Natural killer cell (primary cell): ENCODE measurements at regions of chr3 and their contacts with region 1.

Region 1: DNA sequence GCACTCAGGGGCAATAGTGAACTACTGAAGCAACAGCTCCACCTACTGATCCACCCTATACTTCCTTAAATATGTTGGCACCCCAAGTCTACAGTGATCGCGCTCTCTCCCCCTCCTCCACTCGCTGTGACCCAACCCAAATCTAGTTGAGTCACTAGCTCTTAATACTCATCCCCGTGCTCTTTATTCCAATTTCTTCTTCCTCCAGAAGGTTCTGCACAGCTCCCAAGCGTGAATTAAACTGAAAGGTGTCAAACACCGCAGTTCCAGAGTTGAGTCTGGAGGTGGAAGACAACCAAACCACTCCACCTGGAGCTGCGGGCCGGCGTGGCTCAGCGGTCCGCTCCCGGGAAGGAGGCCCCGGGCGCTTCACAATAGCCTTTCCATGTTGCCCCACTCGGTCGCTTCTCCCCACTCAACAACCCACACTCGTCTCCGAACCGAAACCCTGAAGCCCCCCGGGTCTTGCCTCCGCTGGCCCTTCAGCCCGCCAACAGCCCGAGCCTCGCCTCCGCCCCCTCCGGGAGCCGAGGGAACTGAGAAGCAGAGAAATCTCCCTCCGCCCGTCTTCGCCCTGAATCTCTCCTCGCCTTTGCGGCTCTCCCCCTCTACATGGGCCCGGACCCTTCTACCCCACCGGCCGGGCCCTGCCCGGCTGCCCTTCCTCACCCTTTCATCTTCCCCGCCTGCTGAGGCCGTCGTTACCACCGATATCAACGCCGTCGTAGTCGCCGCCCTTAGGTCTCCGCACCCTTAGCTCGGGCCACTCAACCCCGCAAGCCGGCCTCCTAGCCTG is 578 bp downstream of the NAA50 start:
- DNase-seq: peak; percentile 63 to 94
- ATAC-seq: peak; percentile 65 to 85 (median 66)
- H3K4me3 ChIP-seq: peak overlapping the region; percentile 89
- H3K4me3 Mint-ChIP-seq: peak overlapping the region; percentile 100
- H3K27ac ChIP-seq: peak overlapping the region; percentile 96
- H3K27ac Mint-ChIP-seq: peak overlapping the region; percentile 93 to 100
- H3K4me1 ChIP-seq: peaks cover 25% of the 10 kb centered on the region
- H3K4me1 Mint-ChIP-seq: peaks cover 83% of the 10 kb centered on the region in 2 donors
- H3K27me3 ChIP-seq: no peaks in the 10 kb centered on the region
- H3K27me3 Mint-ChIP-seq: no peaks in the 10 kb centered on the region
- CTCF ChIP-seq: peak; percentile 68

Region 2: GRCh38 chr3:112561731-112562688 is 1183.5 kb before region 1 on chr3 and contains the starts of genes ATG3 and SLC35A5:
- intact Hi-C with region 1: loop called (anchors 5 kb)
- DNase-seq: peak; percentile 98 to 99
- ATAC-seq: peak; percentile 80 to 94 (median 86)
- H3K4me3 ChIP-seq: peak within 1 kb of the TSS; percentile 92
- H3K4me3 Mint-ChIP-seq: peak within 1 kb of the TSS; percentile 95
- H3K27ac ChIP-seq: peak within 1 kb of the TSS; percentile 96
- H3K27ac Mint-ChIP-seq: peak within 1 kb of the TSS; percentile 96 to 97
- H3K4me1 ChIP-seq: peaks cover 15% of the 10 kb centered on the region
- H3K4me1 Mint-ChIP-seq: peaks cover 46 to 47% of the 10 kb centered on the region in 2 donors
- H3K27me3 ChIP-seq: no peaks in the 10 kb centered on the region
- H3K27me3 Mint-ChIP-seq: no peaks in the 10 kb centered on the region
- CTCF ChIP-seq: no peak
- total RNA-seq, gene ATG3: 49.4 to 53.6 (median 52.0) TPM
- total RNA-seq, gene SLC35A5: 10.5 to 17.4 (median 11.2) TPM

Region 3: DNA sequence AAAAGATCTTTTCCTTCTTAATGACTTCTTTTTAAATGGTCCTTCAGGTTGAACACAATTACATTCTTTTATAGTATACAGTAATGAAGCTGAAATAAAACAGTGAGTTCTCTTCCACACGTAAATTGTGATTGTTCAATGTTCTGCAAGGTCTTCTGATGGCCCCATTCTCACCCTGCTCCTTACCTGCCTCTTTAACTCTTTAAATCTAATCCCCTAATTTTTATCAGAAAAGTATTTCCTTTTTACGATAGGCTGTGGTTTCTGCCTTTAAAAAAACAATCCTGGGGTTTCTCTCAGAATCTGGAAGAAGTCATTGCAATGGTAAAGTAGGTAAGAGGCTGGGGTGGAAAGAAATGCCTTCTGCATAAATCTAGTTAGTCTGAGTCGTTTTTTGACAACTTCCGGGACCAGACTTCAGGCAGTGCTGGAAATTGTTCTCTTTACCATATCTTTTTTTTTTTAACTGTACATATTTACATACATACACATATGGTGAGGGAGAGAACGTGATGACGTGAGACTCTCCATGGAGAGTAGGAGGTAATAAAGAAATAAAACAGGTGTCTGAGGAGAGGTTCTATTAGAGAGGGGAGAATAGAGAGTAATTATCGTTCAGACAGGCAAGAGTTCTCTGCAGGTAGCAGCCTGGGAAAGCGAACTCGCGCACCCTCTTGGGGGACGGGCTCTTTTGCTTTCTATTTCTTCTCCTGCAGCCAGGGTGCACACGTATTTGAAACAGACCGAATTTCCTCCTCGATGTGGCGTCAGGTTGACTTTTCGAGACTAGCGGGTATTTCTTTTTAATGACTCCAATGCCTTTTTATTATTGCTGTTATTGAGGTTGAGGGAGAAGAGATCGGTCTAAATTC is 213.4 kb before region 1 on chr3 and contains the start of gene SIDT1:
- intact Hi-C with region 1: loop called (anchors 5 kb)
- DNase-seq: peak; percentile 58 to 89
- ATAC-seq: peak; percentile 72 to 84 (median 77)
- H3K4me3 ChIP-seq: peak within 1 kb of the TSS; percentile 87
- H3K4me3 Mint-ChIP-seq: peak within 1 kb of the TSS; percentile 97
- H3K27ac ChIP-seq: peak within 1 kb of the TSS; percentile 95
- H3K27ac Mint-ChIP-seq: peak within 1 kb of the TSS; percentile 98 to 100
- H3K4me1 ChIP-seq: peaks cover 30% of the 10 kb centered on the region
- H3K4me1 Mint-ChIP-seq: peaks cover 51 to 55% of the 10 kb centered on the region in 2 donors
- H3K27me3 ChIP-seq: no peaks in the 10 kb centered on the region
- H3K27me3 Mint-ChIP-seq: peaks cover 6 to 10% of the 10 kb centered on the region in 2 donors
- CTCF ChIP-seq: no peak
- total RNA-seq, gene SIDT1: 86.9 to 136 (median 101) TPM

Region 4: DNA sequence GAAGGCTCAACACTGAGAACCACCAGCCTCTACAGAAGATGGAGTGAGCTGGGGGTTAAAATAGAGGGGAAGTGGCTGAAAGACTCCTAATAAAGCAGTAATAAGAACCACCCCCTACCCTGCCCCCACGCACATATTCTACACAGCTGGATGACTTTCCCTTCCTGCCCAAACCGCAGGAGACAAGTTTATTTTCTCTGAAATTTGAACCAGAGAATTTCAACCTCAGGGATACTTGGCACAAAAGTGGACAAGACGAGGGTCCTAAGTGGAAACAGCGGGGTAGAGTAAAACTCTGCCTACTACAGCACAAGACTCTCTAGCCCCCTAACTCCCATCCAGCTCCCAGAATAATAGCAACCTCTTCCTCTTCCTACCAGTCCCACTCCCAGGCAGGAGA is 77.5 kb before region 1 on chr3:
- intact Hi-C with region 1: no loop called
- DNase-seq: no peak
- ATAC-seq: no peak
- H3K4me3 ChIP-seq: no peak overlapping the region
- H3K4me3 Mint-ChIP-seq: no peak overlapping the region
- H3K27ac ChIP-seq: no peak overlapping the region
- H3K27ac Mint-ChIP-seq: no peak overlapping the region
- H3K4me1 ChIP-seq: peaks cover 5% of the 10 kb centered on the region
- H3K4me1 Mint-ChIP-seq: peaks cover 13 to 15% of the 10 kb centered on the region in 2 donors
- H3K27me3 ChIP-seq: no peaks in the 10 kb centered on the region
- H3K27me3 Mint-ChIP-seq: no peaks in the 10 kb centered on the region
- CTCF ChIP-seq: no peak

Region 5: GRCh38 chr3:113678773-113679172 is 66.7 kb before region 1 on chr3:
- intact Hi-C with region 1: no loop called
- DNase-seq: no peak
- ATAC-seq: no peak
- H3K4me3 ChIP-seq: no peak overlapping the region
- H3K4me3 Mint-ChIP-seq: no peak overlapping the region
- H3K27ac ChIP-seq: no peak overlapping the region
- H3K27ac Mint-ChIP-seq: peak overlapping the region; percentile 24 to 57
- H3K4me1 ChIP-seq: no peaks in the 10 kb centered on the region
- H3K4me1 Mint-ChIP-seq: peaks cover 22 to 39% of the 10 kb centered on the region in 2 donors
- H3K27me3 ChIP-seq: no peaks in the 10 kb centered on the region
- H3K27me3 Mint-ChIP-seq: no peaks in the 10 kb centered on the region
- CTCF ChIP-seq: no peak

Region 6: DNA sequence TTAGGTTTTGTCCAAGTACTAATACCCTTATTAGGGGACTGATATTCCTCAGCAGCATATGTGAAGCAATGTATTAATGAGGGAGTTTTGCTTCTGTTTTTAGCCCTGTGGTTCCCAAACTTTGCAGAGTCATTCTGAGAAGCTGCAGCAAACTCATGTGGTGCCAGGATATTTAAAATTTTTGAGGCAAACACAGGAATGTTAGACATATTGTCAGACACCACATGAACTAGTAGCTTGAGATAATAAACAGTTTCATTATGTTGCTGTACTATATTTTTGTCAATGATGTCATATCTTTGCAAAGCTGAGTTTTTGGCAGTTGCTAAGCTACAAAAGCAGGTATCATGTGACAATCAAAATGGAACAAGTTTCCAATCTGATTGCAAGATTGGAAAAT is 38.0 kb after region 1 on chr3:
- intact Hi-C with region 1: loop called (anchors 5 kb)
- DNase-seq: peak in 1 of 2 donors; percentile 2
- ATAC-seq: peak; percentile 43 to 74 (median 54)
- H3K4me3 ChIP-seq: no peak overlapping the region
- H3K4me3 Mint-ChIP-seq: no peak overlapping the region
- H3K27ac ChIP-seq: no peak overlapping the region
- H3K27ac Mint-ChIP-seq: peak overlapping the region; percentile 75 to 84
- H3K4me1 ChIP-seq: peaks cover 3% of the 10 kb centered on the region
- H3K4me1 Mint-ChIP-seq: peaks cover 9% of the 10 kb centered on the region in 2 donors
- H3K27me3 ChIP-seq: no peaks in the 10 kb centered on the region
- H3K27me3 Mint-ChIP-seq: no peaks in the 10 kb centered on the region
- CTCF ChIP-seq: no peak

Region 7: DNA sequence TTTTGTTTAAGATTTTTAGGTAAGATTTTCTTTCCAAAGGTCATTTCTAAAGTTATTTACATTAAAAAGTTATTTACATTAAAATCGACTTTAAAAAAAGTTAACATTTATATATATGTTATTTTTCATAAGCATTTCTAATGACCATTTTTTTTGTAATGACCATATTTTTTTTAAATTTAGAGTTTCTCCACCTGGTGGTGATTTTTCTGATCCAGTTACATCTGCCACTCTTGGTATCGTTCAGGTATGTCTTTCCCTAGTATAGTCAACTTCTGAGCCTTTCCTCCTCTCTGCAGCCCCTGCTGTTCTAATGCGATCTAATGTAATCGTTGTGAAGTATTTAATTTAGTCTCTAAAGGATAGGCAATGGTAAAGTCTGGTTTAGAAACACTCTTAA is 50.2 kb after region 1 on chr3:
- intact Hi-C with region 1: no loop called
- DNase-seq: peak in 1 of 2 donors; percentile 12
- ATAC-seq: no peak
- H3K4me3 ChIP-seq: no peak overlapping the region
- H3K4me3 Mint-ChIP-seq: no peak overlapping the region
- H3K27ac ChIP-seq: no peak overlapping the region
- H3K27ac Mint-ChIP-seq: no peak overlapping the region
- H3K4me1 ChIP-seq: no peaks in the 10 kb centered on the region
- H3K4me1 Mint-ChIP-seq: no peaks in the 10 kb centered on the region
- H3K27me3 ChIP-seq: no peaks in the 10 kb centered on the region
- H3K27me3 Mint-ChIP-seq: no peaks in the 10 kb centered on the region
- CTCF ChIP-seq: no peak

Region 8: DNA sequence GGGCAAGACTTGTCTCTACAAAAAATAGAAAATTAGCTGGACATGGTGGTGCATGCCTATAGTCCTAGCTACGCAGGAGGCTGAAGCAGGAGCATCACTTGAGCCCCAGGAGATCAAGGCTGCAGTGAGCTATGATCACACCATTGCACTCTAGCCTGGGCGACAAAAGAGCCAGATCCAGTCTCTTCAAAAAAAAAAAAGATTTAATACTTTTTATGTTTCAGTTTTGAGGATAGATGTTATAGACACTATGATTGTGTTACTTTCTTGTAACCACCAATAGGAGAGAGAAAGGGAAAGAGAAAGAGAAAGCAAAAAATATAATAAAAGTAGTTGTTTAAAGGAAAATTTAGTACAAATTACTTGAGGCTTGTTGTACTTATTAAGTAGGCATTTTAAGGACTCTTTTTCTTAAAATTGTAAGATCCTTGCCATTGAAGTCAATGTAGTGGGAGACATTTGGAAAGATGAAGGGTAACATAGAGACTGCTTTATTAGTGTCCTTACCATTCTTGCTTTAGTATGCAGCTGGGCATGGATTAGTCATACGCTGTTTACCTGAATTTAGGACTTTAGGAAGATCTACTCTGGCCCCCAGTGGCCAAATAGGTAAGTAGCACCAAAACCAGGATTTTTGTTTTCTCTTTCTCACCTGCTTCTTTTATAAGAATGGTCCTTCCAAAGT is 167.2 kb after region 1 on chr3:
- intact Hi-C with region 1: loop called (anchors 2 kb)
- DNase-seq: peak in 1 of 2 donors; percentile 73
- ATAC-seq: peak; percentile 86 to 91 (median 88)
- H3K4me3 ChIP-seq: no peak overlapping the region
- H3K4me3 Mint-ChIP-seq: peak overlapping the region; percentile 51
- H3K27ac ChIP-seq: peak overlapping the region; percentile 8
- H3K27ac Mint-ChIP-seq: peak overlapping the region; percentile 61 to 69
- H3K4me1 ChIP-seq: no peaks in the 10 kb centered on the region
- H3K4me1 Mint-ChIP-seq: peaks cover 8 to 9% of the 10 kb centered on the region in 2 donors
- H3K27me3 ChIP-seq: no peaks in the 10 kb centered on the region
- H3K27me3 Mint-ChIP-seq: no peaks in the 10 kb centered on the region
- CTCF ChIP-seq: peak; percentile 45

Region 9: DNA sequence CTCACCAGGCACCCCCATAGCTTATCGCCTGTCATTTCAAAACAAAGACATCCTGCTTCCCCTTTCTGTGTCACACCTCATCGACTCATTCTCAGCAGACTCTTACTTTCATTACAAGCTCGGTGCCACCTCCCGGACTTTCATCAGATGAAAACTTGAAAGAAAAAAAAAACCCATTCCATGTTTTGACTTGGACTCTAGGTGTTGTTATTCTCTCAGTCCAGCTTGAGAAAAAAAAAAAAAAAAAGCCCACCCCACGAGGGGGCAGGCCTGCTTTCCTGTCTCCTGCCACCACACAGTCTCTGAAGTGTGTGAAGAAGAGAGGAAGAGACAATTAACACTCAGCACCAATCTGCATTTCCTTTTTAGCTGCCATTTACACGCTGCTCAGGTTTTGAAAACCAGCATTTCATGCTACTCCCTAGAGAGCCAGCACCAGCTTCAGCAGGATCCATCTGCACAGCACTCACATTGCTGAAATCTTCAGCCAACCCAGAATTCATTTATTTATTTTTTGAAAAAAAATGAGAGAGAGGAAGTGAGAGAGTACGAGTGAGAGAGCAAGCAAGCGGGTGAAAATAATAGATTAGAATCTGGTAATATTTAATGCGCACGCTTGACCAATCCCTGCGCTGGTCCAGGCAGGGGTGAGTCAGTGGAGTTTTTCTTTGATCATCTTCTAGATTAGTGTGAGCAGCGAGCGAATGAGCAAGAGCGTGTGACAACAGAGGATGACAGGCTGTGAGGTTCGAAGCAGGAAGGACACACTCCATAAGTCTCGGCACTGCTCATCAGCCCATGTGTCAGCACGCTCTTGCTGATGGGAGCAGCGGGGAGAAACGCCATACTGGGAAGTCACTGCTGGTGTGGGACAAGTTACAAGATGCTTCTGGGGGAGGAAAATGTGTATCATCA is 468.4 kb after region 1 on chr3:
- intact Hi-C with region 1: loop called (anchors 2 kb)
- DNase-seq: peak; percentile 73 to 88
- ATAC-seq: peak; percentile 61 to 77 (median 63)
- H3K4me3 ChIP-seq: peak overlapping the region; percentile 46
- H3K4me3 Mint-ChIP-seq: no peak overlapping the region
- H3K27ac ChIP-seq: peak overlapping the region; percentile 97
- H3K27ac Mint-ChIP-seq: no peak overlapping the region
- H3K4me1 ChIP-seq: peaks cover 63% of the 10 kb centered on the region
- H3K4me1 Mint-ChIP-seq: no peaks in the 10 kb centered on the region
- H3K27me3 ChIP-seq: no peaks in the 10 kb centered on the region
- H3K27me3 Mint-ChIP-seq: no peaks in the 10 kb centered on the region
- CTCF ChIP-seq: peak; percentile 12